SK-N-SH (cell line): ENCODE measurements at regions of chr14 and their contacts with region 1.

Region 1: DNA sequence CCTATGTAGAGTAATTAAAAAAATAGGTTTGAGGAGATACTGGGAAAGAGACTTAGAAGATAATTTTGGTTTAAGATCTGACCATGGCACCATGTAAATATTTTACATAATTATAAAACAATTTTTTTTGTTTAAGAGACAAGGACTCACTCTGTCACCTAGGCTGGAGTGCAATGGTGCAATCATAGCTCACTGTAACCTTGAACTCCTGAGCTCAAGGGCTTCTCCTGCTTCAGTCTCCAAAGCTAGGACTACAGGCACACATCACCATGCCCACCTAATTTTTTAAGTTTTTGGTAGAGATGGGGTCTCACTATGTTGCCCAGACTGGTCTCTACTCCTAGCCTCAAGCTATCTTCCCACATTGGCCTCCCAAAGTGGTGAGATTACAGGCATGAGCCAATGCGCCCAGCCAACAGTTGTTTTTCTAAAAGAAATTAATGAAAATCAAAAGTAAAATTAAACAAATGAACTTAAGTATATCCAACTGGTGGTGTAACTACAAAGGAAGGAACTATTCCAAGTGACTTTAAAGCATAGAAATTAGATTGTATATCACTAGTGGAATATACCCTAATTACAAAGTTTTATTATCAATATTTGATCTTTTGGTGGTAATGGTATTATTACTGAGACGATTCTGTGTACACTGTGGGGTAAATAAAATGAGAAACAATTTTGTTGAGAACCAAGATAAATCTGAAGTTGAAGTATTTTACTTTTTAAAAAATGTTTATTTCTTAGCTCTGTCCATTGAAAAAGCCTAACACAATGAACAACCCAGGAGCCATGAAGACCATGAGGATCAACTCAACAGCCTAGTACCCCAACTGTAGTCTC is 29.1 kb downstream of the COCH start:
- DNase-seq: no peak
- H3K4me3 ChIP-seq: no peak overlapping the region
- H3K27ac ChIP-seq: no peak overlapping the region
- H3K4me1 ChIP-seq: no peaks in the 10 kb centered on the region
- H3K27me3 ChIP-seq: no peaks in the 10 kb centered on the region
- CTCF ChIP-seq: no peak
- EP300 ChIP-seq: no peak
- RAD21 ChIP-seq: no peak

Region 2: DNA sequence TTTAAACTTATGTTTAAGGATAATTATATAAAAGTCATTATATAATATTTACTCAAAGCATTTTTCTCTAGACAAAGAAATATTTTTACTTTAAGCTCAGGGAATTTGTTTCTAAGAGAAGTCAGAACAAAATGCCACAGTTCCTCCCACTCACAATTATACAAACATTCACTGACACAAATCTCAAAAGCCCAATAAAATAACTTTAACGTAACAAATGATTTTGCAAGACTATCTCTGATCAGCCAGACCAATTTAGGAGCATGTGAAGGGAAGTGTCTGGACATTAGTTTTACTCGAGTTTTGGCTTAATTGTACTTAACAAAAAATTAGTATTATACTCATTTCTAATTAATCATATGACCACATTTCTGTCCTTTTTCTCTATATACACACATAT is 12.1 kb after region 1 on chr14:
- CTCF ChIA-PET with region 1: interaction called, 11 read pairs
- POLR2A ChIA-PET with region 1: no interaction called
- DNase-seq: no peak
- H3K4me3 ChIP-seq: no peak overlapping the region
- H3K27ac ChIP-seq: no peak overlapping the region
- H3K4me1 ChIP-seq: peaks cover under 1 to 4% of the 10 kb centered on the region in 2 experiments; a peak in 2 of 4 replicates
- H3K27me3 ChIP-seq: no peaks in the 10 kb centered on the region
- CTCF ChIP-seq: no peak
- EP300 ChIP-seq: no peak
- RAD21 ChIP-seq: no peak

Region 3: DNA sequence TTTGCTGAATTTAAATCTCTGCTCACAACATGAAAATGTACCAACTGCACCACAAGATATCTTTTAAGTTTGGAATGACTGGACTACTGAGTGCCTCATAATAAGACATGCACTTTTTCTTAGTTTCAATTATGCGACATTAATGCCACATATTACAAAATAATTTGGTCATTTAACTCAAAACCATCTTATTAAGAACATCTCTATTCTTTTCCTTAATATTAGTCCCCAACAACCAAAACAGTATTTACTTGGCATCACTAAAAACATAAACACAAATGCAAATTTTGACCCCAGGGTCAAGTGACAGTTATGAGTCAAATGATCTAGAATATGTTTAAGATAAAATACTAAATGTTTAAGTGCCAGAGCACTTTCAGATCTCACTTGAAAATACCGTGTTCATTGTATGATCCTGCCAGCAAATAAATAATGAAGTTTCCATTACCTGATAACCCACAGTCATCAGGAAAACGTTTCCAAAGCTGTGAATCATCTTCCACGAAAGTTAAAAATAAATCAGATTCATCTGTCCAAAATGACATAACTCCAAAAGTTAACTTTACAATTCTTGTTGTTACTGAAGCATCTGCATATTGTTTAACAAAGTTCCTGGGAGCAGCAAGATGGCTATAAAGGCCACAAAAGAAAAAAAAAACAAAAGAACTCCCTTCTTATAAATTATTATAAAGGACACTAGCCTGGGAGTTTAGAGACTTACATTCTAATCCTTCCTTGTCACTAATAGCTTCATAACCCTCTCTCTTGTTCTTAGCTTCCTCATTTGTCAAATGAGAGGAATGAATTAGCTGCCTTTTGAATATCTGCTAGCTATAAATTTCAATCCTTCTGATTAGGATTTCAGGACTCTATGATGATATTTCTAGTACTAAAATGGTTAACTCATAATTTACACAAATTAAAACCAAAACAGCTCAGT is 91.4 kb after region 1 on chr14:
- CTCF ChIA-PET with region 1: no interaction called
- POLR2A ChIA-PET with region 1: no interaction called
- DNase-seq: no peak
- H3K4me3 ChIP-seq: no peak overlapping the region
- H3K27ac ChIP-seq: peak overlapping the region; percentile 29 to 81; a peak in 3 of 4 replicates
- H3K4me1 ChIP-seq: peaks cover 8 to 13% of the 10 kb centered on the region in 2 experiments
- H3K27me3 ChIP-seq: no peaks in the 10 kb centered on the region
- CTCF ChIP-seq: no peak
- EP300 ChIP-seq: peak in 1 of 2 experiments; percentile 65; a peak in 2 of 4 replicates
- RAD21 ChIP-seq: no peak

Region 4: DNA sequence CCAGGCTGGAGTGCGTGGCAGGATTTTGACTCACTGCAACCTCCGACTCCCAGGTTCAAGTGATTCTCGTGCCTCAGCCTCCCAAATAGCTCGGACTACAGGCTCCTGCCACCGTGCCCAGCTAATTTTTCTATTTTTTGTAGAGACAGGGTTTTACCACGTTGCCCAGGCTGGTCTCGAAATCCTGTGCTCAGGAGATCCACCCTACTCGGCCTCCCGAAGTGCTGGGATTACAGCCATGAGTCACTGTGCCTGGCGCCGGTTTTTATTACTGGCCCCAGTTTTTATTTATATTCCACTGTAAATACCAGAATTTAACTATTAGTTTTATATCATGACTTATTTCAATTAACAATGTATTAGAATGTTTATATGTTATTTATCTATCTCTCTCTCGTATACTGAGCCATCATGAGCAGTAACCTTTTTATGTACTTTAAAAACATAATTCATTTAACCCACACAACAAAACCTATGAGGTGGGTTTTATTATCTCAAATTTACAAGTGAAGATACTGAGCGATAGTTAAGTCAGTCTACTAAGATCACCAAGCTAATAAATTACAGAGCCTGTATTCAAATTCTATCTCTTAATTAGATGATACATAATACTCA is 256.3 kb after region 1 on chr14:
- CTCF ChIA-PET with region 1: no interaction called
- POLR2A ChIA-PET with region 1: no interaction called
- DNase-seq: no peak
- H3K4me3 ChIP-seq: no peak overlapping the region
- H3K27ac ChIP-seq: no peak overlapping the region
- H3K4me1 ChIP-seq: peaks cover 0 to 2% of the 10 kb centered on the region in 2 experiments; a peak in 1 of 4 replicates
- H3K27me3 ChIP-seq: no peaks in the 10 kb centered on the region
- CTCF ChIP-seq: no peak
- EP300 ChIP-seq: no peak
- RAD21 ChIP-seq: no peak

Region 5: GRCh38 chr14:31194095-31194494 is 290.6 kb after region 1 on chr14:
- CTCF ChIA-PET with region 1: no interaction called
- POLR2A ChIA-PET with region 1: no interaction called
- DNase-seq: no peak
- H3K4me3 ChIP-seq: no peak overlapping the region
- H3K27ac ChIP-seq: peak overlapping the region; percentile 25 to 91; a peak in 3 of 4 replicates
- H3K4me1 ChIP-seq: peaks cover 0 to 23% of the 10 kb centered on the region in 2 experiments; a peak in 3 of 4 replicates
- H3K27me3 ChIP-seq: no peaks in the 10 kb centered on the region
- CTCF ChIP-seq: no peak
- EP300 ChIP-seq: no peak
- RAD21 ChIP-seq: no peak